Activated CD8-positive, alpha-beta memory T cell treated with anti-CD3 and anti-CD28 coated beads, Interleukin-2, amount 10 ng/mL, durations not matched to agents 7 days and 5 days (primary cell): ENCODE measurements at regions of chr6 and their contacts with region 1.

Region 1: DNA sequence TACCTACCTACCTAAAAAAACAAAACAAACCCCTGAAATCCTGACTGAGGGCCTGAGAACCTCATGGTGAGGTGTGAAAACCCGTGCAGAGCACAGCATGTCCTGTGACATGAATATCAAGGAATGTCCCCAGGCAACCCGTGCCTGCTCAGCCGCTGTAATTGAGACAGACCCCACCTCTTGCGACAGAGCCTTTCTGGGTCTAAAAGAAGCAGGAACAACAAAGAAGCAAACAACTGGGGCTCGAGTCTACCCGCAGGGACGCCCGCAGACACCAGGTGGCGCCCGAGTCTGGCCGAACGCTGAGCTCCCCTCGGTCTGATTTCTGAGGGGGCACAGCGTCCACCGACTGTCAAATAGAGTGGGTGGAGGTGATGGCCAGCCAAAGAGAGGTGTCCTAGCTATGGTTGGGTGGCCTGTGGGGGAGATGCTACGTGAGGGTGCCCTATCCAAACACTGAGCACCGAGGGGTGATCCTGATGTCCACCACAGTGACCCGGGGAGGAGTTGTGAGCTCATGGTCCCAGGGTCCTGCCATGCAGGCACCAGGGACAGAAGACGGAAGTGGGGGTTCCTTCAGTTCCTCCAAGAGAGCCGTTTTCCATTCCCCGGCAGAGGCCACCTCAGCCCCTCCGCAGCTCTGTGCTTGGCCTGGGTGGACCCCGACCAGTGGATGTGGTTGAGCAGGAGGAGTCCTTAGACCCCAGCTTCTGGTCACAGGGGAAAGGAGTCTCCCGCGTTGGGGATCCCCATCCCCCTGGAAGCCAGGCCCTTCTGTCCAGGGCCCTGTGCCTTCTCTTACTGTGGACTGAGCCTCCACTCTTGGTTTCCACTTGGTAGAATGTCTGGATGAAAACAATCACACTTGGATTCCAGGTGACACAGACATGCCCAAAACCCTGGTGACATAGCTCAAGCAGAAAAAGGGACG is 268.2 kb downstream of the CDC5L start:
- DNase-seq: peak; percentile 82
- ATAC-seq: peak; percentile 82
- H3K4me3 Mint-ChIP-seq: no peak overlapping the region
- H3K27ac Mint-ChIP-seq: peak overlapping the region; percentile 81
- H3K4me1 Mint-ChIP-seq: peaks cover 9% of the 10 kb centered on the region
- H3K27me3 Mint-ChIP-seq: peaks cover 3% of the 10 kb centered on the region

Region 2: GRCh38 chr6:44630125-44631028 is 25.3 kb before region 1 on chr6:
- CTCF ChIA-PET with region 1: interaction called, 12 read pairs
- DNase-seq: peak; percentile 59
- ATAC-seq: peak; percentile 83
- H3K4me3 Mint-ChIP-seq: no peak overlapping the region
- H3K27ac Mint-ChIP-seq: no peak overlapping the region
- H3K4me1 Mint-ChIP-seq: peaks cover 10% of the 10 kb centered on the region
- H3K27me3 Mint-ChIP-seq: peaks cover 9% of the 10 kb centered on the region

Region 3: DNA sequence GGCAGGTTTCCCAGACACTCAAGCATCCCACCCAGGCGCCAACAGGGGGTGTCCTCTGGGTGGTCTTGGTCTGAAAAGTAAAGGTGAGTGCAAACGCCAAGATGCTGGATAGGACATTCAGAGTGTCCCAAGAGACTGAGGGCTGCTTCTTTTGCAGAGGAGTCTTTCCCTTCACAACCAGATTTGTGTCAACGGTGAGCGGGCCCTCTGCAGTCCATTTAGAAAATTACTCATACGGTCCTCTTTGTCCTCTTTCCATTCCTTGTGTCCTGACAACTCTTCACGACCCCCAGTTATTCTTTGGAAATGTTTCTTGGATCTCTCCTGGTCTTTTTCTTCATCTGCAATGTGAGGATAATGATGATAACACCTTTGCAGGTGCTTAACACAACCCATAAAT is 10.4 kb before region 1 on chr6:
- CTCF ChIA-PET with region 1: interaction called, 12 read pairs
- DNase-seq: no peak
- ATAC-seq: no peak
- H3K4me3 Mint-ChIP-seq: no peak overlapping the region
- H3K27ac Mint-ChIP-seq: no peak overlapping the region
- H3K4me1 Mint-ChIP-seq: peaks cover 48% of the 10 kb centered on the region
- H3K27me3 Mint-ChIP-seq: no peaks in the 10 kb centered on the region

Region 4: GRCh38 chr6:44674351-44675155 is 18.9 kb after region 1 on chr6:
- CTCF ChIA-PET with region 1: no interaction called
- DNase-seq: peak; percentile 31
- ATAC-seq: no peak
- H3K4me3 Mint-ChIP-seq: no peak overlapping the region
- H3K27ac Mint-ChIP-seq: no peak overlapping the region
- H3K4me1 Mint-ChIP-seq: no peaks in the 10 kb centered on the region
- H3K27me3 Mint-ChIP-seq: peaks cover 12% of the 10 kb centered on the region

Region 5: DNA sequence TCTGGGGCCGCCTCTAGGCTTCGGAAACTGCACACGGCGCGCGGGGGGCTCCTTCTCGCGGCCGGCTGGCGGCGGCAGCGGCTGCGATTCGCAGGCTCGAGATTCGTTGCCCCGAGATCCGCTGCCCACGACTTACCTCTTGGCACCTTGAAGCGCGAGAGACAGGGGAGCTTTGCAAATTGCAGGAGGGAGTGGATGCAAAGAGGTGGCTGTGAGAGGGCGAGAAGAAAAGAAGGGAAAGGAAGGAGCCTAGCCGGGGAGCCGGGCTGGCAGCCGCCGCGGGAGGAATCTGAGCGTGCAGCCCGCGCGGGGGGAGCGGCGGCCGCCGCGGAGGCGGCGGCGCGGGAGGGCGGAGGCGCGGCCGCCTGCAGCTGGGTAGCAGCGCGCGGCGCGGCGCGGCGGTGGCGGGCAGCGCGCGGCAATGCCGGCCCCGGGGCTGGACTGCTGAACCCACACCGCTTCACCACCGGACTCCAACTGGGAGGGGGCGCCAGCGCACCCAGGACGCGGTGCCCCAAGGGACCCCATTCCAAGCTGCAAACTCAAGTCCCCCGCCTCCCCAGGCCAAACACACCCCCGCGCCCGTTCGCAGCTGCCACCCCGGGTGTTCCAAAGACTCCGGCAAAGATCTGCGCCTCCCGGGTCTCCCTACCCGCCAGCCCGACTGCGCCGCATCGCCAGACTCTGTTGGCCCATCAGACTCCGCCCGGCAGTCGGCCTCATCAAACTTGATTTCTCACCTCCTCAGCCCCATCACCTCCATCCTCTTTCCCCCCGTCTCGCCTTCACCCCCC is 766.2 kb after region 1 on chr6:
- CTCF ChIA-PET with region 1: interaction called, 24 read pairs
- DNase-seq: peak; percentile 75
- ATAC-seq: peak; percentile 37
- H3K4me3 Mint-ChIP-seq: peak overlapping the region; percentile 95
- H3K27ac Mint-ChIP-seq: peak overlapping the region; percentile 91
- H3K4me1 Mint-ChIP-seq: peaks cover 42% of the 10 kb centered on the region
- H3K27me3 Mint-ChIP-seq: peaks cover 27% of the 10 kb centered on the region

Region 6: GRCh38 chr6:45714741-45715507 is 1059.2 kb after region 1 on chr6:
- CTCF ChIA-PET with region 1: interaction called, 14 read pairs
- DNase-seq: peak; percentile 71
- ATAC-seq: peak; percentile 63
- H3K4me3 Mint-ChIP-seq: no peak overlapping the region
- H3K27ac Mint-ChIP-seq: peak overlapping the region; percentile 71
- H3K4me1 Mint-ChIP-seq: peaks cover 57% of the 10 kb centered on the region
- H3K27me3 Mint-ChIP-seq: no peaks in the 10 kb centered on the region

Region 7: GRCh38 chr6:45922728-45923351 is 1267.2 kb after region 1 on chr6:
- CTCF ChIA-PET with region 1: interaction called, 24 read pairs
- DNase-seq: peak; percentile 83
- ATAC-seq: peak; percentile 55
- H3K4me3 Mint-ChIP-seq: peak overlapping the region; percentile 30
- H3K27ac Mint-ChIP-seq: peak overlapping the region; percentile 79
- H3K4me1 Mint-ChIP-seq: peaks cover 65% of the 10 kb centered on the region
- H3K27me3 Mint-ChIP-seq: no peaks in the 10 kb centered on the region